Panc1 (cell line): ENCODE measurements at regions of chr1 and their contacts with region 1.

Region 1: DNA sequence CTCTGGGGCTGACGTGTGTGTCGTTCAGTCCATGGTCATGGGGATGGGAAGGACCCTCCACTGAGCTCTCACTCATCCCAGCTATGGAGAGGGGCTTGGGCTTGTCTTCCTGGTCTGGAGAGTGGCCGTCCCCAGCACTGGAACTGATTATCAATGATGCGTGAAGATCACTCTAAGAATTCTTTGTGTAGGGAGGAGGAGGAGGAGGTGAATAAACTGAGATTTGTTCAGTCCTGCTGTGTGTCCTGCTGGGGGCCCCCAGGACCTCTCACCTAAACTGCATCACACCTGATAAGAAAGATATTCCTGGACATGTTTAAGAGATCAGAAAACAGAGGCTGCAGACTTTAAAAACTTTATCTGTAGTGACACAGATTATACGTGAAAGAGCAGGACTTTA is 21.2 kb downstream of the RHOU start:
- DNase-seq: no peak
- ATAC-seq: no peak
- H3K4me3 ChIP-seq: no peak overlapping the region
- H3K27ac ChIP-seq: no peak overlapping the region
- H3K4me1 ChIP-seq: no peaks in the 10 kb centered on the region
- H3K27me3 ChIP-seq: peaks cover 5% of the 10 kb centered on the region; the same call in 1 of the 2 replicates
- CTCF ChIP-seq: no peak

Region 2: GRCh38 chr1:228781161-228781808 is 24.8 kb after region 1 on chr1:
- CTCF ChIA-PET with region 1: no interaction called
- POLR2A ChIA-PET with region 1: no interaction called
- in situ Hi-C with region 1: no loop called
- intact Hi-C with region 1: no loop called
- DNase-seq: no peak
- ATAC-seq: no peak
- H3K4me3 ChIP-seq: no peak overlapping the region
- H3K27ac ChIP-seq: no peak overlapping the region
- H3K4me1 ChIP-seq: no peaks in the 10 kb centered on the region
- H3K27me3 ChIP-seq: no peaks in the 10 kb centered on the region
- CTCF ChIP-seq: no peak

Region 3: GRCh38 chr1:229561141-229561540 is 804.7 kb after region 1 on chr1:
- CTCF ChIA-PET with region 1: no interaction called
- POLR2A ChIA-PET with region 1: interaction called, 11 read pairs
- in situ Hi-C with region 1: no loop called
- intact Hi-C with region 1: no loop called
- DNase-seq: no peak
- ATAC-seq: no peak
- H3K4me3 ChIP-seq: no peak overlapping the region
- H3K27ac ChIP-seq: no peak overlapping the region
- H3K4me1 ChIP-seq: peaks cover 14% of the 10 kb centered on the region; the same call in 1 of the 2 replicates
- H3K27me3 ChIP-seq: no peaks in the 10 kb centered on the region
- CTCF ChIP-seq: no peak